Right ventricle myocardium inferior (tissue), 1 donor: ENCODE measurements at regions of chr9 and their contacts with region 1.

Region 1: DNA sequence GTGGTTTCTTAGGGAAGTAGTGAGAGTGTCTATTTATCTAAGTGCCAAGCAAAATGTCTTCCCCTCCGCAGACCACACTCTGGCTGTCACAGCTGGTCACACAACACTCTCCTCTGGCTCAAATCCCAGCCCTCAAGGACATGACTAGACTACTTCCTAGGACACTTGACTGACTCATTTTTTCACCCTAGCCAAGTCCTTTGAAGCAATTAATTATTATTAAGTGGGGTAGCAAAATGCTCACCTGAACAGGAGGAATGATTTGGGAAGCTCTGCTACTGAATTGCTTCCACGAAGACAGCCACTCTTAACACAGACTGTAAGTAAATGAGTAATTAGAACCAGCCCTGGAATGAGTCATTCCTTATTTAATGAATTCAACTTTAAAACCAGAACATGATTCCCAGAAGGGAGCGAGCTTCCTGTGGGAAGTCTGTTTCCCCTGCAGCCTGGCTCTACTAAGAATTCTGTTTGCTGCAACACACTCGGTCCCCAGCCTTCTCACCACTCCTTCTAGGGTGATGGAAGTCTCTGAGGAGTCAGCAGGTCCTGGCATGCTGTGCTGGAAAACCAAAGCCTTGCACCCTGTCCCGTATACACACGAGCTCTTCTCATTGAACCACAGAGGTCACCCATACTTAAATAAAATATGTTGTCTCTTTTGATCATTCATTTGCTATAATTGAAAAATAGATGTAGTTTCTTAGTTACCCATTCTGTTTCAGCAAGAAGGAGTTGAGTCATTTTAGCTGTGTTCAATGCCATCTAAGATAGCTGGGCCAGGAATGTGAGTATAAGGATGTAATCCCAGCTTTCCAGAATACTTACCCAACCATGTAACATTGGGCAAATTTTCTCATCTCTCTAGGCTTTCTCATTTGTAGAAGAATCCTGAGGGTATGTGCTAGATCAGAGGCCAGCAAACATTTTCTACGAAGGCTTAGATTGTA is 218.6 kb upstream of the RASEF start:
- DNase-seq: no peak
- ATAC-seq: peak; percentile 81

Region 2: GRCh38 chr9:83315649-83316048 is 34.1 kb after region 1 on chr9:
- intact Hi-C with region 1: loop called (anchors 5 kb)
- DNase-seq: no peak
- ATAC-seq: no peak